Mammary epithelial cell (primary cell): ENCODE measurements at regions of chr6 and their contacts with region 1.

Region 1: GRCh38 chr6:29887819-29888776 is 54.2 kb upstream of the HLA-A start:
- DNase-seq: peak; percentile 61
- H3K4me3 ChIP-seq: peak overlapping the region; percentile 64 to 71 (median 67)
- H3K27ac ChIP-seq: peak overlapping the region; percentile 89
- H3K4me1 ChIP-seq: peaks cover 7% of the 10 kb centered on the region
- H3K27me3 ChIP-seq: no peaks in the 10 kb centered on the region
- CTCF ChIP-seq: no peak

Region 2: GRCh38 chr6:29953001-29953441 is 64.9 kb after region 1 on chr6:
- CTCF ChIA-PET with region 1: no interaction called
- dilution Hi-C with region 1: no loop called
- in situ Hi-C with region 1: no loop called
- intact Hi-C with region 1: loop called (anchors 1 kb)
- DNase-seq: peak; percentile 91
- H3K4me3 ChIP-seq: no peak overlapping the region
- H3K27ac ChIP-seq: no peak overlapping the region
- H3K4me1 ChIP-seq: peaks cover 2% of the 10 kb centered on the region
- H3K27me3 ChIP-seq: no peaks in the 10 kb centered on the region
- CTCF ChIP-seq: no peak

Region 3: DNA sequence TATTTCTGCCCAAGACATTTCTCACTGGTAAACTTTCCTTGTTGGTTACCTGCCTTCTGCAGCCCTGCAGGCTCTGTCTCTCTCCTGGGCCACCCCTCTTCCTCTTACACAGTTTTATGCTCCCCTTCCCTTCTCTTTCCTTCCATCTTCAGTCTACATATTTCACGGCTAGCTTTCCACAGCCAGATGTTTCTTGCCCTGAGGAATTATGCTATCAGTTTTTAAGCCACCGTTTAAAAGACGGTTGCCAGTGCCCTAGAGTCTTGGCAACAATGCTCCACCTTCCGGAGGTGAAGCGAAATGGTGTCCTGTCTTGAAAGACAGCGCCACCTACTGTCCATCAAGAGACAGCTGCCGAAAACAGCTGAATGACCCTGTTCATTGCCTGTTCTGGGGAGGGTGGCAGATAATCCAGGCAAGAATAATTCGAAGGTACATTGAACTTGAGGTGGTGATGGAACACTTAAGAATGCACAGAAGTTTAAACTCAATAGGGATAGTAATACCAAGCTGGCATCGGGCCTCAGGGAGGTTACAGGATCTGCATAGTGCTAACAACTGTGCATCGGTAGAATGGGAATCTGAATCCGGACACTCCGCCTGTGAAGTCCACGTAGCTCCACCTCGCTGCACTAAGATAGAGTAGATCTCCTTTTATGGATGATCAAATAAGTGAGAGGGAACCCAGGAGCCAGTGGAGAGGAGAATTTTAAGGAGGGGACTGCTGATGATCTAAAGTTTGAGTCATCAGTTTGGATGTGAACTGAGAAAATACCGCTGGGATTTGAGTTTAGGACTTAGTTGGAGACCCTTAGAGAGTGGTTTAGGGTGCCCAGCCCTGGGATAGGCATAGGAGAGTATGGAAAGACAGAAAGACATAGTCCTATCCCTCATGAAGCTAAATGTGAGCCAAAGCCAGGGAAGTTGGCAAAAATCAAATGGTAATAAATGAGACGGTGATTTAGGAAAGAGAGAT is 243.1 kb after region 1 on chr6:
- CTCF ChIA-PET with region 1: no interaction called
- dilution Hi-C with region 1: no loop called
- in situ Hi-C with region 1: no loop called
- intact Hi-C with region 1: no loop called
- DNase-seq: peak; percentile 72
- H3K4me3 ChIP-seq: no peak overlapping the region
- H3K27ac ChIP-seq: no peak overlapping the region
- H3K4me1 ChIP-seq: peaks cover 3% of the 10 kb centered on the region
- H3K27me3 ChIP-seq: peaks cover 7% of the 10 kb centered on the region
- CTCF ChIP-seq: peak; percentile 100